SK-N-SH (cell line): ENCODE measurements at regions of chr15 and their contacts with region 1.

Region 1: DNA sequence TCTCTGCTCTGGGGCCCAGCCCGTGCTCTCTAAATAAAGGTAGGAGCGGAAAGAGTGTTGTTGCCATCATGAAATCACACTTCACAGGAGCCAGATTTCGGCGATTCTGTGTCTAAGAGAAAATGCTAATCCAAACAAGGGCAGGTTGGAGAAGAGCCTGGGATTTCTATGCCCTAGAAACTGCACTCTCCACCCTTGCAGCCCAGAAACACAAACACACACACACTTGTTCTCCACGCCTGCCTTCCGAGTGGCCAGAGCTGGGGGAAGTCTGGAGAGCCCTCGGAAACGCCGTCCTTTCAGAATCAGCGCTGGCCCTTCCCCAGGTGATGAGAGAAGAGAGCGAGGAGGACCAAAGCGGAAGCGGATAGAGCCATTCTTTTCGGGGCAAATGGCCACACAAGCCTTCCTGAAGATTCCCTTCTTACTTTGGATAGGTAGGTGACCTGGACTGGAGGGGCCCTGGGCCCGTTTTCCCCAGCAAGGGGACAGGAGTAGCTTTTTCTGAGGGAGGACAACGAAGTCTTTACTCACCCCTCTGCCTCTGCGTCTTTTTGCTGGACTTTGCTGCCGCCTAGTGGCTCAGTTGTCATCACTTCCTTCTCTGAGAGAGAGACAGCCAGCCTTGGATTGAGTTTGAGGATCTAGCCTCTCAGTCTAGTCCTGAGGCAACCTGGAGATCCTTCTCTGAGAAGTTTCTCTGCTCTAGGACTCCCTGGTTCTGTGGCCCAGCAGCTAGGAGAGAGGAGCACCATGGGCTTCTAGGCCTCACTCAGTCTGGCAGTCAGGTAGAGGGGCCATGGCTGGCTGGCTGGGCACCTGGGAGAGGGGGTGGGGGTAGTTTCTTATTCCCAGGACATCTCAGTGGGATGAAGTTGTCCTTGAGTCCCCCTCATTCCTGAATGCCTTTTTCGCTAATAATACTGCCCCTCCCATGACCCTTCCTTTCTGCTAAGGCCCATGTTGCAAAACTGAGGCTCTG is 37.7 kb downstream of the SENP8 start:
- DNase-seq: peak; percentile 75
- H3K4me3 ChIP-seq: peak overlapping the region; percentile 47 to 63
- H3K27ac ChIP-seq: 0 out of 4 replicates have a peak overlapping the region, but pooled peaks of 1 of the 2 experiments have one; percentile 4
- H3K4me1 ChIP-seq: peaks cover 10% of the 10 kb centered on the region in 2 experiments; a peak in 1 of 4 replicates
- H3K27me3 ChIP-seq: no peaks in the 10 kb centered on the region
- CTCF ChIP-seq: peak; percentile 86
- EP300 ChIP-seq: no peak; a peak in 1 of 4 replicates
- RAD21 ChIP-seq: peak; percentile 97

Region 2: GRCh38 chr15:71575474-71576045 is 580.4 kb before region 1 on chr15:
- CTCF ChIA-PET with region 1: interaction called, 16 read pairs
- POLR2A ChIA-PET with region 1: no interaction called
- DNase-seq: peak; percentile 36
- H3K4me3 ChIP-seq: no peak overlapping the region
- H3K27ac ChIP-seq: no peak overlapping the region
- H3K4me1 ChIP-seq: no peaks in the 10 kb centered on the region
- H3K27me3 ChIP-seq: no peaks in the 10 kb centered on the region
- CTCF ChIP-seq: peak; percentile 65
- EP300 ChIP-seq: no peak
- RAD21 ChIP-seq: peak; percentile 81

Region 3: GRCh38 chr15:71743861-71744382 is 412.0 kb before region 1 on chr15:
- CTCF ChIA-PET with region 1: interaction called, 59 read pairs
- POLR2A ChIA-PET with region 1: no interaction called
- DNase-seq: peak; percentile 69
- H3K4me3 ChIP-seq: no peak overlapping the region
- H3K27ac ChIP-seq: no peak overlapping the region
- H3K4me1 ChIP-seq: peaks cover 0 to 9% of the 10 kb centered on the region in 2 experiments; a peak in 1 of 4 replicates
- H3K27me3 ChIP-seq: no peaks in the 10 kb centered on the region
- CTCF ChIP-seq: peak; percentile 86
- EP300 ChIP-seq: no peak
- RAD21 ChIP-seq: peak; percentile 71

Region 4: GRCh38 chr15:71780115-71780976 is 375.6 kb before region 1 on chr15:
- CTCF ChIA-PET with region 1: interaction called, 58 read pairs
- POLR2A ChIA-PET with region 1: no interaction called
- DNase-seq: peak; percentile 77
- H3K4me3 ChIP-seq: peak overlapping the region in 1 of 2 experiments; percentile 3; a peak in 1 of 4 replicates
- H3K27ac ChIP-seq: no peak overlapping the region
- H3K4me1 ChIP-seq: peaks cover 0 to 5% of the 10 kb centered on the region in 2 experiments; a peak in 1 of 4 replicates
- H3K27me3 ChIP-seq: no peaks in the 10 kb centered on the region
- CTCF ChIP-seq: peak; percentile 86
- EP300 ChIP-seq: no peak
- RAD21 ChIP-seq: peak; percentile 64

Region 5: GRCh38 chr15:71800835-71801745 is 354.8 kb before region 1 on chr15:
- CTCF ChIA-PET with region 1: interaction called, 28 read pairs
- POLR2A ChIA-PET with region 1: no interaction called
- DNase-seq: peak; percentile 72
- H3K4me3 ChIP-seq: no peak overlapping the region; a peak in 1 of 4 replicates
- H3K27ac ChIP-seq: no peak overlapping the region
- H3K4me1 ChIP-seq: peaks cover under 1 to 6% of the 10 kb centered on the region in 2 experiments; a peak in 2 of 4 replicates
- H3K27me3 ChIP-seq: no peaks in the 10 kb centered on the region
- CTCF ChIP-seq: peak; percentile 88
- EP300 ChIP-seq: no peak
- RAD21 ChIP-seq: peak; percentile 95

Region 6: GRCh38 chr15:71841563-71841962 is 314.4 kb before region 1 on chr15:
- CTCF ChIA-PET with region 1: interaction called, 11 read pairs
- POLR2A ChIA-PET with region 1: no interaction called
- DNase-seq: no peak
- H3K4me3 ChIP-seq: no peak overlapping the region
- H3K27ac ChIP-seq: no peak overlapping the region
- H3K4me1 ChIP-seq: no peaks in the 10 kb centered on the region; a peak in 2 of 4 replicates
- H3K27me3 ChIP-seq: no peaks in the 10 kb centered on the region
- CTCF ChIP-seq: no peak
- EP300 ChIP-seq: no peak
- RAD21 ChIP-seq: no peak

Region 7: GRCh38 chr15:72098040-72098439 is 57.9 kb before region 1 on chr15:
- CTCF ChIA-PET with region 1: no interaction called
- POLR2A ChIA-PET with region 1: no interaction called
- DNase-seq: no peak
- H3K4me3 ChIP-seq: no peak overlapping the region
- H3K27ac ChIP-seq: no peak overlapping the region
- H3K4me1 ChIP-seq: peaks cover 0 to under 1% of the 10 kb centered on the region in 2 experiments; a peak in 1 of 4 replicates
- H3K27me3 ChIP-seq: no peaks in the 10 kb centered on the region
- CTCF ChIP-seq: no peak
- EP300 ChIP-seq: no peak
- RAD21 ChIP-seq: no peak

Region 8: DNA sequence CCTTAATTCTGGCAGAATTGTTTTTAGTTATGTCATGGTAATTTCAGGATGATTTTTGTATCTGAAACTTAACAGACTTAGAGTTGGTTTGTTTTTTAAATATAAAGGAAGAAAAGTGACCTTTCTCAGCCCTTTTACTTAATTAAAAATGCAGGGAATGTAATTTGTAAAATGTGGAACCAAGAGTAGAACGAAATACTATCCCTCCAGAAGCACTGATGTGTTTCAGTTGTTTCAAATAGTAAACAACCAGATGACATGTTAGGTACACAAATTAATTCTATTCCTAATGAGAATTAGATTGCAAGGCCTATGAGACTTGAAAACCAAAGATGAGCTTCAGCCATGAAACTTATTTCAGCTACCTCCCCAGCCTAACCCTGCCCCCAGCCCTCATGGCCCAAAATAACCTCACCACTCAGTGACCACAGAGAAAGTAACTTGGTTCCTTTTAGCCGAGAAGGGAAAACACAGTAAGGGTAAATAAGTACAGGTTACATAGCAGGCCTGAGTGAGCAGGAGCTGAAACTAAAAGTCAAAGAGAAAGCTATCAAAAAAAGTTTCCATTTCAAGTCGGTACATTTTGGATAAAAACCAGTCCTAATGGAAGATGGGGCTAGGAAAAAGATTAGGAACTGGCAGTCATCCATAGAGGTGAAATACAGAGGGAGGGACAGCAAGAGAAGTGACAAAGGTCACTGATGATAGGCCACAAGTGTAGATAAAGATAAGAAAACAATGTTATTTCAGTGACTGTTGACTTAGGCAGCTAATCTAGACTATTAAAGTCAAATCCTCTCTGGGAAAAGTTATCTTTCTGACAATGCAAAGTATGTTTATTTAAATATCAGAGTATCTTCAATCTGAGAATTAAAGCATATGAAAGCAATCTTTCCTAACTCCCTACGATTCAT is 14.5 kb before region 1 on chr15:
- CTCF ChIA-PET with region 1: interaction called, 31 read pairs
- POLR2A ChIA-PET with region 1: no interaction called
- DNase-seq: no peak
- H3K4me3 ChIP-seq: no peak overlapping the region
- H3K27ac ChIP-seq: no peak overlapping the region
- H3K4me1 ChIP-seq: peaks cover 0 to 2% of the 10 kb centered on the region in 2 experiments; a peak in 2 of 4 replicates
- H3K27me3 ChIP-seq: no peaks in the 10 kb centered on the region
- CTCF ChIP-seq: no peak
- EP300 ChIP-seq: no peak
- RAD21 ChIP-seq: no peak